GM13976 (cell line): ENCODE measurements at regions of chr3 and their contacts with region 1.

Region 1: DNA sequence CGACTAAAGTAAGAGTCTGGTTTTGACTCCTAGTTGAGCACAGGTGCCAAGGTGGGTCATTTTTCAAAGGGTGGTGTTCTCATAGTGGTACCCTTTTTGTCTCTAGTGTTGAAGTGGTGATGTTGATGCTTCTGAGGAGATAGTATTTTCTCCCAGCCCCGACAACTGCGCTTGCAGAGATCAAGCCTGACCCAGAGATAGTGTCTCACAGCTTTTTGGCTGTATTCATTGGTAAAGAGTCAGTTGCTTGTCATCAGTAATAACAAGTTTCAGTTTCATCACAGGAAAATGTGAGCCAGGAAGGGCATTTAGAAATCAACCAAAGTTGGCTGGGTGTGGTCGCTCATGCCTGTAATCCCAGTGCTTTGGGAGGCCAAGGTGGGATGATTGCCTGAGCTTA is 139.3 kb downstream of the NFKBIZ start:
- DNase-seq: no peak
- CTCF ChIP-seq: no peak

Region 2: GRCh38 chr3:101946906-101947305 is 41.7 kb before region 1 on chr3:
- in situ Hi-C with region 1: loop called (anchors 5 kb)
- DNase-seq: no peak
- CTCF ChIP-seq: no peak